Right ventricle myocardium inferior (tissue), 1 donor: ENCODE measurements at regions of chr12 and their contacts with region 1.

Region 1: GRCh38 chr12:751192-751998 is 984 bp upstream of the WNK1 start:
- DNase-seq: peak; percentile 96
- ATAC-seq: peak; percentile 72

Region 2: DNA sequence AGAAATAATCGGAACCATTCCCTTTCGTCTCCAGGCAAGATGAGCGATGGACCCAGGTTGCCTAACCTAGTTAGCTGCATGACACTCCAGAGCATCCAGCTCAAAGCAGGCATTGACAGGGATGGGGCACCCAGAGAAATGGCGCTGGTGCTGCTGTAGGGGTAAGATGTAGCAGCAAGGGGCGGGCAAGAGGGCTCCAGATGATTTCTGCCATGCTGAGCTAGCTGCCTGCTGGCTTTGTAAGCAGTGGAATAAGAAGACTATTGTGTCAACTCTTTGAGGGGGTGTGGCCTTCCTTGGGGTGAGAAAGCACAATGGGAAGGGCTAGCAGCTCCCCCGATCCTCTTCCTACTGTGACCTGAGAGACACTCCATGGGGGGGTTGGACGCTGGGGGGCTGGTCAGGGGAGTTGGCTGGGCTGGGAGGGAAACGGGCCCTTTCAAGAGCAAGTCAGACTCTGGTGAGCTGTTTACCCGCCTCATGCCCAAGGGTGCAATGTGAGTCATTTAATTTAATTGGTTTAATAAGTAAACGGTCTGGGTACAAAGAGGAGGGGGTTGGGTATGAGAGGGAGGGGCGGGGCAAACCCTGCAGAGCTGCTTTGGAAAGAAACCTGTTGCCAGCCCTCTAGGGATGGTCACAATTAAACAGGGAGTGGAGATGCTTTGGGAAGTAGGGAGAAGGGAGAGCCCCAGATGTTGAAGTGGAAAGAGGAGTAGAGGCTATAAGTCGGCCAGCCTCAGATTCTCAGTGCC is 241.1 kb before region 1 on chr12:
- intact Hi-C with region 1: no loop called
- DNase-seq: no peak
- ATAC-seq: no peak

Region 3: DNA sequence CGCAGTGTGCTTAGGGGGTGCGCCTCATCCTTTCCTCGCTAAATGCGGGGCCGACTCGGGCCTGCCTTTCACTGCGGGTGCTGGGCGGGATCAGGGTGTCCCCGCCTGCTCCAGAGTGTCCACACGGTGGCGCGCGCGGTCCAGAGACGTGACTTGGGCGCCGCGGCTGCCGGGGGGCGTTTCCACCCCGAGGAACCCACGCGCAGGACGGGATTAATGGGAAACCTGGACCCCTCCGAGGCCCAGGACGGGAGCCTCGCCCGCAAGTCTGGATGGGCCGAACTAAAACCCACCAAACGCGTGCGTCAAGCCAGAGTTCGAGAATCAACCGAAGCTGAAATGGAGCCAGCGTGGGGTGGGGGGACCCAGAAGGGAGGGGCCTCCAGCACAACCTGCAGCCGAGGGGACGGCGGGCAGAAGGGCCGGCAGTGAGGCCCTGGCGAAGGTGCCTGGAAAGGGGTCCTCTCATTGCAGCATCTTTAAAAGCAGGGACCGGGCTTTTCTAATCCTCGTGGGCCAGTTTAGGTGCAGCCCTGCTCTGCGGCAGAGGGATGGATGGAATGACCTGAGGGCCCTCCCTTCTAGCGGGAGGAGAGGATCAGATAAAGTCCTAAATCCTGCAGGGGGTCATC is 181.5 kb before region 1 on chr12:
- intact Hi-C with region 1: loop called (anchors 1 kb)
- DNase-seq: peak; percentile 96
- ATAC-seq: peak; percentile 75

Region 4: DNA sequence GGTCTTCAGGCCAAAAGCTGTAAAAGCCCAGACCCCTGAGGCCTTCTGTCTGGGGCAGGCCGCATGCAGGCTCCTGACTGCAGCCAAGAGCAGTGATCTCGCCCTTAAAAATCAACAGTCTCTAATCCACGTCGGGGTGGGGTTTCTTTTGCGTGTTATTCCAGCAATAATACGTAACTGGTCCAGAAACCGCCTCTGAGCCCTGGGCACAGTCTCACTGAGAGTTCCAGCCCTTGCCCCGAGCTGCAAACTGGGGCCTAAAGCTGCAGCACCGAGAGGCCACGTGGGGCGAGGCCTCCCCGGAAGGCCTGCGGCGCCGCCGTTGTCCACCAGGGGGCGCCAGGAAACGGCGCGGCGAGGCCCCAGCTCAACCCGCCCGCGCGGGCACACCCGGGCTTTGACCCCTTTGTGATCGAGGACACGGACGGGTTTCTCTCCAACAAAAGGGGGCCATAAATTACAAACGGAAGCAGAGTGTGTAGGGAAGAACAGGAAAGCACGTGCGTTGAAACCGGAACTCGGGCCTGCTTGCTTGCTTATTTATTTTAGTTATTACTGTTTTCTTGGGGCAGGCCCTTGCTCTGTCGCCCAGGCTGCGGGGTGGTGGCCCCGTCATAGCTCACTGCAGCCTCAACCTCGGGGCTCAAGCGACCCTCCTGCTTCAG is 175.3 kb before region 1 on chr12:
- intact Hi-C with region 1: loop called (anchors 1 kb)
- DNase-seq: peak; percentile 93
- ATAC-seq: peak; percentile 75

Region 5: DNA sequence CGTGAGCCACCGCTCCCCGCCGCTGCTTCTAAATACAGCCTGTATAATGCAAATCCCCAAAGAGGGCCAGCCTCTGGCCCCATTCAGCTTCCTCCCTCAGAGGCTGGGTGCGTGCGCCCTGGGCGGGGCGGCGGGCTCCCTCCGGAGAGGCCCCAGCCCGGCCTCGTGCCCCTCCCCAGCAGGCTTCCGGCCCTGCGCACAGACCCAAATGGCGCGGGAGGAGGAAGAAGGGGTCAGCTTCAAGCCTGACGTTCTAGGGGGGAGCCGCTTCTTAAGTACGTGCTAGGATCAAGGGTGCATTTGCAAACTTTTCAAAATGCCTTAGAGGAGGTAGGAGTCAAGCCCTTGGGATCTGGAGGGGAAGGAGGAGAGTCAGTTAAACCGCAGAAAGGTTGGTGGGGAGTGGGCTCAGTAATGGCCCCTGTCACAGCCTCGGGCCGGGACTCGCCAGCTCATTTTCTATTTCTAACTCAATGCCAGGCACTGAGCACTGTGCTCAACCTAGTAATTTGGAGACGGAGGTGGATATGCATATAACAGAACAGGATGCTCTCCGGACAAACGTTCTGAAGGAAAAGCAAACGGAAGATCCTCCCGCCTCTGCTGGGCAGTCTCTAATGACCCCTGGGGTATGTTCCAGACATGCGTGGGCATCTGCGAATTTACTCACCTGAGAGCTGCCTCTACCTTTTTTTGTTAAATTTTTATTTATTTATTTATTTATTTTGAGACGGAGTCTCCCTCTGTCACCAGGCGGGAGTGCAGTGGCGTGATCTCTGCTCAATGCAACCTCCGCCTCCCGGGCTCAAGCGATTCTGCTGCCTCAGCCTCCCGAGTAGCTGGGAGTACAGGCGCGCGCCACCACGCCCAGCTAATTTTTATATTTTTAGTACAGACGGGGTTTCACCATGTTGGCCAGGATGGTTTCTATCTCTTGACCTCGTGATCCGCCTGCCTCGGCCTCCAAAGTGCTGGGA is 120.5 kb before region 1 on chr12:
- intact Hi-C with region 1: no loop called
- DNase-seq: peak; percentile 90
- ATAC-seq: peak; percentile 75

Region 6: GRCh38 chr12:642633-643474 is 108.5 kb before region 1 on chr12:
- intact Hi-C with region 1: loop called (anchors 1 kb)
- DNase-seq: peak; percentile 93
- ATAC-seq: peak; percentile 69

Region 7: DNA sequence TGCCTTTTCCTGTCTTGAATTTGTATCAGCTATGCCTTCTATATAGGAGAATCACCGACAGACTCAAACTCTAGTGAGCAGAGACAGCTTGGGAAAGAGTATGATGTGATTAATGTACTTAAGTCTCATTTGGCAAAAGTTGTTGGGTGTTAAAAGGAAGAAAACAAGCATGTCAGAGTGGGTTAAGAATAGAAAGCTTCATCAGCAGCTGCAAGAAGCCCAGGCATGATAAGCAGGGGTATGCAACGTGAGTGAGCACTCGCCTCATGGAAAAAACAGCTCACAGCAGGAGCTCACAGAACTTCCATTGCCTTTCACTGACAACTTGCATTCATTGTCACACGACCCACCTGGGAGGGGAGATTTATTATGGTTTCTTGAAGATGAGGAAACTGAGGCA is 34.9 kb before region 1 on chr12:
- intact Hi-C with region 1: loop called (anchors 1 kb)
- DNase-seq: no peak
- ATAC-seq: peak; percentile 38

Region 8: GRCh38 chr12:810671-811415 is 59.4 kb after region 1 on chr12:
- intact Hi-C with region 1: loop called (anchors 5 kb)
- DNase-seq: no peak
- ATAC-seq: no peak

Region 9: DNA sequence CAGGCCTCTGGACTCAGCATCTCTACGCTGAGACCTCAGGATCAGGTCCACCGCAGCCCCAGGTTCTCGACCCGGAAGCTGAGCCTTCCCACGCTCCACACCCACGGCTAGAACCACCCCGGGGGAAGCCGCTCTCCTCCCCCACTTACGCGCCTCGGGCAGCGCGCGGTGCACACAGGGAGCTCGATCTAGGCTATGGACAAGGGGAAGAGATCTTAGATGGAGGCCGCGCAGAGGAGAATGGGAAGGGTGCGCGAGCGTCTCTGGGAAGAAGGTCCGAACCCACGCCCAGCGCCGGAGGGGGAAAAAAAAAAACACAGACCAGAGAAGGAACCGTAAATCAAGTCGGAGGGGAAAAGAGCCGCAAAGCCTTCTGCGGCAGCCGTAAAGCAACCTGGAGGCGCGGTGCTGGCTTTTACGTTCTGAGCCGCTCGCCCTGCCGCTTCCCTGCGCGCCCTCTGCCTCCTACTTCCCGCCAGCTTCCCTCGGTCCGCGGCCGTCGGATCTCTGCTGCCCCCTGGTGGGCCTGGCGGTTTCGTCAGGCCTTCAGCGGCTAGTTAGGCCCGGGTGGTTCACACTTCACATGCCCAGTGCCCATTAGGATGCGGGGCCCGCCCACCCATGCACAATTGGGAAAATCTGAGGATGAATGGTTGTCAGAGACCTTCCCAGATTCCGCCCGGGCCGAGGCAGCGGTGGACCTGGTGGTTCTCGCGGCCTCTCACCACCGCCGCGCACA is 198.2 kb after region 1 on chr12 and contains the start of gene RAD52:
- intact Hi-C with region 1: loop called (anchors 5 kb)
- DNase-seq: peak; percentile 99
- ATAC-seq: peak; percentile 98
- total RNA-seq, gene RAD52: 7.1 TPM

Region 10: DNA sequence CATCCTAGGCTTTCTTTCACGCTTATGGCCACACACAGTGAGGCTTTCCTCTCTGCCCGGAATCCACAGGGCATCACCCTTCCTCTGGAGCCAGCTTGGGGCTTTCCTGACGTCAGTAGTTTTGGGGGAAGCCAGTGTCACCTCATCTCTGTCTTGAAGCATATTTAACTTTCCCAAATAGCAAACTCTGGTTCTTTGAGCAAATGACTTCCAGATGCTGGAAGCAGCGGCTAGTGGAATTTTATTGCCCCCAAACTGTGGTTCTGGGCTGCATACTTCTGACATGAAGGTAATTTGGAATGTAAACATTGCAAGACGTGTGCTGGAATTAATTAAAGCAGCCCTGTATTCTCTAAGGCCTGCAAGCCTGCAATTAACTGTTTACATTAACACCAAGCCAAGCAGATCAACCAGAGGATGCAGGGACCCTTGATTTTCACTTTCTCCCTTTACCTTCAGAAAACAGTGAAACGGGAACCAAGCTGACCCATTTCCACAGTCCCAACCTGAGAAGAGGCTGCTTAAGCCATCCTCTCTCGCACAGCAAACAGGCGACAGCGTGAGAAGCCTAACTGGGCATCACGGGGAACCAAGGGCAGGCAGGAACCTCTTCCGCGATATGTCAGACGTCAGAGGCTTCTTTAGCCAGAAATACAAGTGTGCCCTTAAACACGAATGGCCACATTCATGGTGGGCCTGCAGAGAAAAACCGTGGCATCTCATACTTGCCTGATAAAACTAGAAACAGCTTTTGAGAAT is 1559.8 kb after region 1 on chr12:
- intact Hi-C with region 1: no loop called
- DNase-seq: no peak
- ATAC-seq: no peak